ENCODE measurements at regions of chr4 and their contacts with region 1.

Region 1: DNA sequence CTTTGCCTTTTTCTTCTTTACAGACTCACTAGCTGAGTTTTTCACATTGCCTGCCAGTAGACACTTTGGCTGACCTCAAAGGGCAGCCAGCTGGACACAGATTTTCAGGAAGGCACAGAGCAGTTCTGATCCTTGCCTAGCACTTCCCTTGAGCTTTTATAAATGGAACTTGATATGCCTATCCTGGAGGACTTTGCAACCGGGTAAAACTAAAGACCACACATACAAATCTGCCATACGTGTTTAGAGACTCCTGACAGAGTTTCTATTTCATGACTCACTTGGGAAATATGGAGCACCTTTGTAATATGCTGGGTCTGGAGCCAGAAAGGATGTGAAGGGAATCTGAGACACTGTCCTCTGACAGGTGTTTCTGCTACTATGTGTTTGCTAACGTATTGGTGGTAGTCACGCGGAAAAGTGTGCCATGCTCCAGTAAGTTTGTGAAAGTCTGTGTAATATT is 56.7 kb upstream of the RASSF6 start:
- DNase-seq: peak; percentile 100
- ATAC-seq: peak; percentile 81
- H3K4me3 ChIP-seq: no peak overlapping the region
- H3K27ac ChIP-seq: peak overlapping the region; percentile 96
- H3K4me1 ChIP-seq: peaks cover 82% of the 10 kb centered on the region
- H3K27me3 ChIP-seq: no peaks in the 10 kb centered on the region
- CTCF ChIP-seq: no peak

Region 2: DNA sequence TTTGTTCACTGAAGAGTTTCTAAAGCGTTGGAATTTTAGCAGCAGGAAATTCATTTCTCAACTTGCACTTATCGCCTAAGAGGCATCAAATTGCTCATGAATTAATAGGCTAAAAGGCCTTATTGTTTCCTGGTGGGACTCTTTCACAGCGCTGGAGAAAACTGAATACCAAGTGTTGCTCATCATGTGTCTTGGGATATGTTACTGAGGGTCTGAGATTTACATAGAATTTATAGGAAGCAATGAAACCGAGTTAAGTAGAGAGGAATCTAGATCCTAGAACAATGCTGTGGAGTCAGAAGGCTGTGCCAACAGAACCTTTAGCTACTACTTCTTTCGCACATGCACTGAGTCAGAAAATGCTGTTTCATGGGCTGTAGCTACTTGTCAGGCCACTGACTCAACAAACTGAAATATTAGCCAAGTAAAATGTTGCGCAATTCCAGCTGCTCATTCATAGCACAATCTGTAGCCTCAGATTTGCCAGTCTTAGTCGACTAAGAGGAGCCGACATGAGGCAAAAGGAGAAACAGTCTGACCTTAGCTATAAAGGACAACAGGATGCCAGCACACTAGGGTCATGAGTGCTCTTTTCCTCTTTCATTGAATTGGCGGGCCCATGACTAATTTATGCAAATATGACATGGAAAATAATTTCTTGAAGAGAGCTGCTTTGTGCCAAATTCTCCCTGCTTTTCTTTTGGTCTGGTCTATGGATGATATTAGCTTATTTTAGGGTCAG is 27.6 kb after region 1 on chr4:
- CTCF ChIA-PET with region 1: no interaction called
- POLR2A ChIA-PET with region 1: interaction called, 17 read pairs
- intact Hi-C with region 1: no loop called
- DNase-seq: peak; percentile 100
- ATAC-seq: peak; percentile 62
- H3K4me3 ChIP-seq: 0 out of 2 replicates have a peak overlapping the region, but pooled peaks have one; percentile 6
- H3K27ac ChIP-seq: peak overlapping the region; percentile 96
- H3K4me1 ChIP-seq: peaks cover 80% of the 10 kb centered on the region
- H3K27me3 ChIP-seq: no peaks in the 10 kb centered on the region
- CTCF ChIP-seq: no peak

Region 3: DNA sequence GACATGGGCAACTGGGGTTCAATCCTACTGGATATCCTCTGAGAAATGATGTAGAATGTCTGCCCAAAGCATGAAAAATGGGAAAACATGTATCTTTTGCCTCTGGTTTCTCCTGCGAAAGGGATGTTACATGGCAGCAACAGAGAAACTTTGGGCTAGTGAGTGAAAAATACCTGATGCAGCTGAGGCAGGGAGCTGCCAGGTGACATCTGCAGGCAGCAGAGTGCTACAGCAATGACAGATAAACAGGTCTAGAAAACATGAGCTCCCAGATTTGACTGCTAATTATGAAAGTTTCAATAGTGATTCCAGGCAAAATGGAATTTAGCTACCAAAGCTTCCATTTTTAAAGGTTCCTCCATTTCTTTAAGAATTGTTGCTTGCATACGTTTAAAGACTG is 187.5 kb after region 1 on chr4:
- CTCF ChIA-PET with region 1: interaction called, 7 read pairs
- POLR2A ChIA-PET with region 1: interaction called, 3 read pairs
- intact Hi-C with region 1: loop called (anchors 2 kb)
- DNase-seq: peak; percentile 73
- ATAC-seq: peak; percentile 11; the same call in 1 of the 2 replicates
- H3K4me3 ChIP-seq: peak overlapping the region; percentile 6; the same call in 1 of the 2 replicates
- H3K27ac ChIP-seq: peak overlapping the region; percentile 82
- H3K4me1 ChIP-seq: peaks cover 70% of the 10 kb centered on the region
- H3K27me3 ChIP-seq: no peaks in the 10 kb centered on the region
- CTCF ChIP-seq: peak; percentile 93

Region 4: DNA sequence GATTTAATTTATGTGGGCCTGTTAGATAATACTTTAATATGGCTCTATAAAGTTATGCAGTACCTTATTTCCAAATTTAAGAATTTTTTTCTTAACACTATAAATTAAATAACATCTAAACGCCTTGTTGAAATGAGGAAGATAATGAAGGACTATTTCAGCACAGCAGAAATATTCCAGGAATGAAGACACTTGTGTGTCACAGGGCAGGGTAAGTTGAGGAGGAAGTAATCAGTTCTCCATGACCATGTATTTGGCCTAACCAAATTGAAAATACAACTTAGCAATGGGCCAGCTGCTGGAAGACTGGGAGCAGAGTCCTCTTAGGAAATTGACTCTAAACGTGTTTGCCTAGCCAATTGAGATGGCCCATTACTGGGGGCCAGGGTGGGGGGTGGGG is 344.7 kb after region 1 on chr4:
- CTCF ChIA-PET with region 1: no interaction called
- POLR2A ChIA-PET with region 1: no interaction called
- intact Hi-C with region 1: loop called (anchors 5 kb)
- DNase-seq: no peak
- ATAC-seq: no peak
- H3K4me3 ChIP-seq: no peak overlapping the region
- H3K27ac ChIP-seq: no peak overlapping the region
- H3K4me1 ChIP-seq: peaks cover 17% of the 10 kb centered on the region
- H3K27me3 ChIP-seq: no peaks in the 10 kb centered on the region
- CTCF ChIP-seq: no peak

Region 5: DNA sequence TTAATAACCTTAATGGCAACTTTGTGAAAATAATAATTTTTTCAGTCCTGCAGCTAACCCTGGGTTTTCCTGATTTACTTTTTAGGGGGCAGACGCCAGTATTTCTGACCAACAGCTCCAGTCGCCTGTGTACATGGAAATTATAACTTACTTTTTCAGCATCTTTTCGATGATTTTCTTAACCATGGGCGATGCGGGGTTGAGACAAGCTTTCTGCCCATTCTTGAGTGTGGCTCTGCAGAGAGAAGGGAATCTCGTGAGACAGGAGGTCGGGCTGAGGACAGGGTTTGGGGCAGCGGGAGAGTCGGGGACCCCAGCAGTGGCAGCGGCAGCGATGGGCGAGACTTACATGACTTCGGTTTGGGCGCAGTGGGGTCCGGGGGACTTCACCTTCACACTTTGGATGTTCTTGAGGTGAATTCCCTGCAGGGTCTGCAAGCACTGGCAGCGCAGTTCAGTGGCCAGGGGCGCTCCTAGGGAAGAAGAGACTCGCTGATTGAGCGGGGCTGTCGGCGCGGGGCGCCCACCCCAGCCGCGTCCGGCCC is 421.6 kb after region 1 on chr4:
- CTCF ChIA-PET with region 1: interaction called, 7 read pairs
- POLR2A ChIA-PET with region 1: no interaction called
- intact Hi-C with region 1: loop called (anchors 5 kb)
- DNase-seq: no peak
- ATAC-seq: peak; percentile 5
- H3K4me3 ChIP-seq: peak overlapping the region; percentile 78
- H3K27ac ChIP-seq: peak overlapping the region; percentile 98
- H3K4me1 ChIP-seq: peaks cover 28% of the 10 kb centered on the region
- H3K27me3 ChIP-seq: no peaks in the 10 kb centered on the region
- CTCF ChIP-seq: no peak

Measured in PC-3 (cell line).